Calu3 (cell line): ENCODE measurements at regions of chr10 and their contacts with region 1.

Region 1: GRCh38 chr10:72794260-72794659 is 99.3 kb upstream of the OIT3 start:
- DNase-seq: no peak
- H3K4me3 Mint-ChIP-seq: no peak overlapping the region
- H3K27ac Mint-ChIP-seq: no peak overlapping the region
- H3K4me1 Mint-ChIP-seq: peaks cover 11% of the 10 kb centered on the region
- H3K27me3 Mint-ChIP-seq: no peaks in the 10 kb centered on the region
- CTCF ChIP-seq: no peak

Region 2: GRCh38 chr10:72753760-72754231 is 40.5 kb before region 1 on chr10:
- CTCF ChIA-PET with region 1: no interaction called
- intact Hi-C with region 1: loop called (anchors 5 kb)
- DNase-seq: no peak
- H3K4me3 Mint-ChIP-seq: no peak overlapping the region
- H3K27ac Mint-ChIP-seq: no peak overlapping the region
- H3K4me1 Mint-ChIP-seq: peaks cover 14% of the 10 kb centered on the region
- H3K27me3 Mint-ChIP-seq: no peaks in the 10 kb centered on the region
- CTCF ChIP-seq: no peak